A673 (cell line): ENCODE measurements at regions of chr2 and their contacts with region 1.

Region 1: DNA sequence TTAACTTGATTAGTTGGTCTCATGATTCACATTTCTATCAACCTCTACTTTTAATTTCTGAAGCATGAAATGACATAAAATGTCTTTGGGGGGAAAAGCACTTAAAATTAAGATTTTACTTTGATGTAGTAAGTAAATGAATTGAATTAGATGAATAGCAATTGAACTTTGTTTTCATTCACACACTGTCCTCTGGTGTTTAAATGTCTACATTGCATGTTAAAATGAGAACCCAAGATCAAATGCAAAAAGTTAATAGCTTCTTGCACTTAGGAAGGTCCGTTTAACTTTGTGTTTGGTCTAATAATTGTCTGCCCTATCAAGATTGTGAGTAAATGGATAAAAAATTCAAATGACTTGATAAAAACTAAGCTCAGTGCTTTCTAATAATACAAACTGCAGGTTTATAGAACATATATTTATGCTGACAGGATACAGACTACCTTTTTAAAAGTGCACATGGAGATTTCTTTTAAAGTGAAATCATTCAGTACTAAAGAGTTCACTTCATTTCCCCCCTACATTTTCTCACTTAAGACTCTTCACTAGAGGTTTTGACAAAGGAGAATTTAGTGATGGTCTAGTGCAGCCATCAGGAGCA is 156.2 kb upstream of the NABP1 start:
- DNase-seq: peak; percentile 45
- H3K4me3 ChIP-seq: no peak overlapping the region
- H3K27ac ChIP-seq: no peak overlapping the region
- H3K4me1 ChIP-seq: no peaks in the 10 kb centered on the region
- H3K27me3 ChIP-seq: no peaks in the 10 kb centered on the region
- CTCF ChIP-seq: peak; percentile 74

Region 2: DNA sequence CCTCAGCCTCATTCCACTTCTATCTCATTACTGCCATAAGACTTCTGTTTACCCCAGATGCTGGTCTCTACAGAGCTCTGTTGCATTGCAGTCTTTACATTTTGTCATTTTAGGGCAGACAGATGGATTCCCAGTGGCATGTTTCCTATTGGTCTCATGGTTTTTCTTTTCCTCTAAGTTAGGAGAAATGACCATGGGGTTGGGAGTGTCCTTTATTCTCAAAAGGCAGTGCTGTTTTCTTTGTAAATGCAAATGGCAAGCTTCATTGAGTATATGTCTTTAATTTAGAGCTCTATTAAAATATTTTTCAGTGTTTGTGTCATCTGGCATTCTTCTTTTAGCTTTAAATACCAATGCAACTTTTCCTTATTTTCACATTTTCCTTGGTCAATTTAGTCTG is 1516.2 kb before region 1 on chr2:
- CTCF ChIA-PET with region 1: no interaction called
- POLR2A ChIA-PET with region 1: no interaction called
- intact Hi-C with region 1: no loop called
- DNase-seq: no peak
- H3K4me3 ChIP-seq: no peak overlapping the region
- H3K27ac ChIP-seq: no peak overlapping the region
- H3K4me1 ChIP-seq: no peaks in the 10 kb centered on the region
- H3K27me3 ChIP-seq: no peaks in the 10 kb centered on the region
- CTCF ChIP-seq: no peak

Region 3: DNA sequence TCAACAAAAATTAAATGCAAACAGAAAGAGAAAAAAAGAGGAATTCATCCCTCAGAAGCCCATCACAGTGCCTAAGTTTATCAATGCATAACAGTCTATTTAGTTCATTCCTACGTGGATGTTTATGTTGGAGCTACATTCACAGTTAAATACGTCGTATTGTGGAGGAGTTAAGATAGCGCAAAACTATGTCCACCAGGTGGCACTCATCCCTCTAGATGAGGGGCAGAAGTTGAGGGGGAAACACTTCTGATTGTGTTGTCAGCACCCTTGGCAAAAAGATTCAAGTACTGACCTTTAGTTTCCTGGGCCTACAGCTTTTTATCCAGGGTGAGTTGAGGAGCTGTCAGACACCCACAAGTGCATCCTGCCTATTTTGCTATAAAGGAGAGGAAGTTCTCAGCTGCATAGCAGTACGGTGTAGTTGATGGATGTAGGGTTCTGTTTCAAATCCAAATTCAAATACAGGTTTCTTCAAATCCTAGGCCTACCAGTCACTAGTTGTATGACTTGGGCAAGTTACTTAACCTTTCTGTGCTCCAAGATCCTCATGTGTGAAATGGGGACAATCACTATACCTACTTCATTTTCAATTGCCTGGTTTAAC is 303.3 kb before region 1 on chr2:
- CTCF ChIA-PET with region 1: interaction called, 3 read pairs
- POLR2A ChIA-PET with region 1: no interaction called
- intact Hi-C with region 1: loop called (anchors 1 kb)
- DNase-seq: peak; percentile 89
- H3K4me3 ChIP-seq: no peak overlapping the region
- H3K27ac ChIP-seq: no peak overlapping the region
- H3K4me1 ChIP-seq: no peaks in the 10 kb centered on the region
- H3K27me3 ChIP-seq: no peaks in the 10 kb centered on the region
- CTCF ChIP-seq: peak; percentile 82

Region 4: DNA sequence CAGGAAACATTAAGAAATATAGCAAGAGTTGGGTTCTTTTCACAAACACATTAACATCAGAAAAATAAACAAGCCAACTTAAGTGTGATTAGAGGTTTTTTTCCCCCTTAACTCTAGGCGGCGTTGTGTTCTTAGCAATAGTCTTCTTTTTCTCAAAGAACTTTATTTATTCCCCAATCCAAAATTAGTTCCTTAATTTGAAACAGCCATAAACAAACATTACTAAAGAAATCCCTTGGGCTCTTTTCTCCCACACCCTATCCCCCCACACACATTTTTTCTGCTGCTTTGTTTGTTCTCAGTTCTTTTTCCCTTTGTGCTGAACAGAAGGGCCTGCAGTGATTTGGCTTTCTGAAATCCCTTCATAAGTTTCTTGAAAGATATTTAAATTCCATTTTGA is 289.7 kb before region 1 on chr2:
- CTCF ChIA-PET with region 1: interaction called, 3 read pairs
- POLR2A ChIA-PET with region 1: no interaction called
- intact Hi-C with region 1: loop called (anchors 5 kb)
- DNase-seq: peak; percentile 53
- H3K4me3 ChIP-seq: no peak overlapping the region
- H3K27ac ChIP-seq: no peak overlapping the region
- H3K4me1 ChIP-seq: peaks cover 5% of the 10 kb centered on the region
- H3K27me3 ChIP-seq: no peaks in the 10 kb centered on the region
- CTCF ChIP-seq: peak; percentile 67

Region 5: DNA sequence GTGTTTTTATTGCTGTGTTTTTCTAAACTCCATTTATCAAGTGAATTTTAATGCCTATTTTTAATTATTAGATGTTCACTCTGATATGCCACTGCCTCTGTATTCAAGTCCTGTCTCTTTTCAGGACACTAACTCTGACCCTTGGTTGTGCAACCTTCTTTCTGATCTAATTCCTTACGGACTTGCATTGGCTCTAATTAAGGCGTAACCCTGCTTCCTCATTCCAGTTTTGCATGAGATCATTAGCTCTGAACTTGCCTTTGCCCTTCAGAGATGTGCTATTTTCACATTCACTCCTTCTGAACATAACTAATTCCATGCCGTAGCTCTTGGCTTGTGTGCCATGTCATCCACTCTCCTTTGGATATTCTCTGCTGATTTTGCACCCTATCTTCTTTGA is 835.5 kb after region 1 on chr2:
- CTCF ChIA-PET with region 1: no interaction called
- POLR2A ChIA-PET with region 1: no interaction called
- intact Hi-C with region 1: no loop called
- DNase-seq: no peak
- H3K4me3 ChIP-seq: no peak overlapping the region
- H3K27ac ChIP-seq: no peak overlapping the region
- H3K4me1 ChIP-seq: no peaks in the 10 kb centered on the region
- H3K27me3 ChIP-seq: no peaks in the 10 kb centered on the region
- CTCF ChIP-seq: no peak